Cardiac septum (tissue), 1 donor: ENCODE measurements at regions of chr13 and their contacts with region 1.

Region 1: GRCh38 chr13:111006506-111007031 is 91.7 kb upstream of the ANKRD10 start:
- DNase-seq: peak; percentile 90

Region 2: DNA sequence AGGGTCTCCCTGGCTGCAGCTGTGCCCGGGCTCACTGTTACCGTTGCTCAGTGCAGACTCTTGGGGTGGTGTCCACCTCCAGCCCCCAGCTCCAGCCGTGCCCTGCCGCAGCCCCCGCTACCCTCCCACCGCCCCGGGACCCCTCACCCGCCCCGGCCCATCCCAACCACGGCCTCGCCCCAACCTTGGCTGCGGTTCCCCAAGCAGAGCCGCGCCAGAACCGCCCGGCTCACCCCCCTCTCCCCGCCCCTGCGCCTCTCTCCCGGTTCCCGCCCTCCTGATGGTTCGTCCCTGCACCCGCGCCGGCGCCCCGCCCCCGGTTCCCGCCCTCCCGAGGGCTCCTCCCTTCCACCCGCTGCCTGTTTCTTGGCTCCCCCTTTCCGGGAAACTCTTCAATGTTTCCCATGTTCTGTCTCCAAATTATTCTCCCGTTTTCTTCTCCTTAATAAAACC is 132.0 kb before region 1 on chr13:
- intact Hi-C with region 1: loop called (anchors 2 kb)
- DNase-seq: peak; percentile 88